ENCODE measurements at regions of chr16 and their contacts with region 1.

Region 1: GRCh38 chr16:78333808-78334207 is 234.4 kb downstream of the WWOX start:
- DNase-seq: peak; percentile 17
- H3K4me3 Mint-ChIP-seq: no peak overlapping the region
- H3K27ac Mint-ChIP-seq: no peak overlapping the region
- H3K4me1 Mint-ChIP-seq: no peaks in the 10 kb centered on the region
- H3K27me3 Mint-ChIP-seq: no peaks in the 10 kb centered on the region

Region 2: GRCh38 chr16:77794586-77794985 is 539.2 kb before region 1 on chr16:
- intact Hi-C with region 1: no loop called
- DNase-seq: no peak
- H3K4me3 Mint-ChIP-seq: no peak overlapping the region
- H3K27ac Mint-ChIP-seq: no peak overlapping the region
- H3K4me1 Mint-ChIP-seq: no peaks in the 10 kb centered on the region
- H3K27me3 Mint-ChIP-seq: peaks cover 30% of the 10 kb centered on the region

Region 3: GRCh38 chr16:78094176-78094575 is 239.6 kb before region 1 on chr16:
- intact Hi-C with region 1: no loop called
- DNase-seq: no peak
- H3K4me3 Mint-ChIP-seq: no peak overlapping the region
- H3K27ac Mint-ChIP-seq: no peak overlapping the region
- H3K4me1 Mint-ChIP-seq: peaks cover 9% of the 10 kb centered on the region
- H3K27me3 Mint-ChIP-seq: peaks cover 17% of the 10 kb centered on the region

Region 4: DNA sequence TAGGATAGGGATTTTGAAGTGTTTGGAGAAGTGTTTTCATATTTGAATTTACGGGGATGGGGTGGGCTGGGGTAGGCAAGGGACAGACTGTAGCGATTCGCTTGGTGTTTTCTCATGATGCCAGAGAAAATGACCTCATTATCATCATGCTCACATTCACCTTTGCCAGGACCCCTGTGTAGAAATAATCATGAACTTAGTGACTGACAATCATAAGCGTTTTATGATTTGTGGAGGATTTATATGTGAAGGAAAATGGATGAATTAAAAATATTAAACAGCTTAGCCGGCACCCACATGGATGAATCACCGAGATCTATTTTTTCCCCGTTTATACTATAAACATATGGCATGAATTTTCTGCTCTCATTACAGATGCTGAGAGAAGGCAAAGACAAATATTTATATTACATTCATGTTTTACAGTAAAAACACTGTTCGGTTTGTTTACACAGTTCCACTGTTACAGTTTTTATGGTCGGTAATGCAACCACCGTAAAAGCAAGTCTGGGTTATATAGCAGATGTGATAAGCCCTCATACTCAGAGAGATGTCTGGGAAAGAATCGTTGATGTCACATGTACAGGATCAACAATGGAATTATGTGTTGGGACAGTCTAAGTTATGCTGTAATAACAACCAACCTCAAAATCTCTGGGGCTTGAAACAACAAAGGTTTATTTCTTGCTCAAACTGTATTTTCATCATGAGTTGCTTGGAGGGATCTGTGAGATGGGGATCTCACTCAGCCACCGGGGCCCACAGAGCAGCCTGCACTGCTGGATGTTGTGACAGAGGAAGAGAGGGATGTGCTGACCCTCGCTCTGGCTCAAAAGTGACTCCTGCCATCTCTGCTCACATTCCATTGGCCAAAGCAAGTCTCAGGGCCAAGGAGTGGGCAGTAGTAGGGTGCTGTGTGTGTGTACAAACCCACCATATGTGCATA is 149.3 kb before region 1 on chr16:
- intact Hi-C with region 1: no loop called
- DNase-seq: no peak
- H3K4me3 Mint-ChIP-seq: no peak overlapping the region
- H3K27ac Mint-ChIP-seq: no peak overlapping the region
- H3K4me1 Mint-ChIP-seq: no peaks in the 10 kb centered on the region
- H3K27me3 Mint-ChIP-seq: no peaks in the 10 kb centered on the region

Region 5: GRCh38 chr16:78277321-78278055 is 56.3 kb before region 1 on chr16:
- intact Hi-C with region 1: no loop called
- DNase-seq: no peak
- H3K4me3 Mint-ChIP-seq: no peak overlapping the region
- H3K27ac Mint-ChIP-seq: no peak overlapping the region
- H3K4me1 Mint-ChIP-seq: no peaks in the 10 kb centered on the region
- H3K27me3 Mint-ChIP-seq: no peaks in the 10 kb centered on the region

Region 6: GRCh38 chr16:78353610-78354275 is 19.9 kb after region 1 on chr16:
- intact Hi-C with region 1: loop called (anchors 1 kb)
- DNase-seq: no peak
- H3K4me3 Mint-ChIP-seq: no peak overlapping the region
- H3K27ac Mint-ChIP-seq: no peak overlapping the region
- H3K4me1 Mint-ChIP-seq: no peaks in the 10 kb centered on the region
- H3K27me3 Mint-ChIP-seq: no peaks in the 10 kb centered on the region

Measured in activated CD4-positive, alpha-beta T cell treated with anti-CD3 and anti-CD28 coated beads, Interleukin-2, amount 10 ng/mL, durations not matched to agents 24 days and 14 days (primary cell).